Panc1 (cell line): ENCODE measurements at regions of chr5 and their contacts with region 1.

Region 1: GRCh38 chr5:150021491-150022162 is 21.1 kb downstream of the HMGXB3 start:
- DNase-seq: no peak
- ATAC-seq: peak; percentile 81
- H3K4me3 ChIP-seq: peak overlapping the region in 1 of 2 experiments; percentile 19; a peak in 1 of 4 replicates
- H3K27ac ChIP-seq: peak overlapping the region; percentile 25; the same call in 1 of the 2 replicates
- H3K4me1 ChIP-seq: peaks cover 17% of the 10 kb centered on the region
- H3K27me3 ChIP-seq: no peaks in the 10 kb centered on the region
- CTCF ChIP-seq: no peak

Region 2: GRCh38 chr5:150000256-150000989 is 21.2 kb before region 1 on chr5 and contains the starts of genes HMGXB3 and TIGD6:
- CTCF ChIA-PET with region 1: interaction called, 6 read pairs
- POLR2A ChIA-PET with region 1: interaction called, 12 read pairs
- in situ Hi-C with region 1: no loop called
- intact Hi-C with region 1: no loop called
- DNase-seq: peak; percentile 69
- ATAC-seq: peak; percentile 97
- H3K4me3 ChIP-seq: peak within 1 kb of the TSS; percentile 92 to 100
- H3K27ac ChIP-seq: peak within 1 kb of the TSS; percentile 97
- H3K4me1 ChIP-seq: peaks cover 17% of the 10 kb centered on the region
- H3K27me3 ChIP-seq: no peaks in the 10 kb centered on the region
- CTCF ChIP-seq: no peak
- total RNA-seq, gene HMGXB3: 56.2 TPM
- total RNA-seq, gene TIGD6: 7.1 TPM

Region 3: GRCh38 chr5:150006318-150006717 is 15.3 kb before region 1 on chr5:
- CTCF ChIA-PET with region 1: interaction called, 6 read pairs
- POLR2A ChIA-PET with region 1: interaction called, 12 read pairs
- in situ Hi-C with region 1: no loop called
- intact Hi-C with region 1: no loop called
- DNase-seq: no peak
- ATAC-seq: no peak
- H3K4me3 ChIP-seq: no peak overlapping the region
- H3K27ac ChIP-seq: no peak overlapping the region
- H3K4me1 ChIP-seq: peaks cover 11% of the 10 kb centered on the region
- H3K27me3 ChIP-seq: no peaks in the 10 kb centered on the region
- CTCF ChIP-seq: no peak

Region 4: DNA sequence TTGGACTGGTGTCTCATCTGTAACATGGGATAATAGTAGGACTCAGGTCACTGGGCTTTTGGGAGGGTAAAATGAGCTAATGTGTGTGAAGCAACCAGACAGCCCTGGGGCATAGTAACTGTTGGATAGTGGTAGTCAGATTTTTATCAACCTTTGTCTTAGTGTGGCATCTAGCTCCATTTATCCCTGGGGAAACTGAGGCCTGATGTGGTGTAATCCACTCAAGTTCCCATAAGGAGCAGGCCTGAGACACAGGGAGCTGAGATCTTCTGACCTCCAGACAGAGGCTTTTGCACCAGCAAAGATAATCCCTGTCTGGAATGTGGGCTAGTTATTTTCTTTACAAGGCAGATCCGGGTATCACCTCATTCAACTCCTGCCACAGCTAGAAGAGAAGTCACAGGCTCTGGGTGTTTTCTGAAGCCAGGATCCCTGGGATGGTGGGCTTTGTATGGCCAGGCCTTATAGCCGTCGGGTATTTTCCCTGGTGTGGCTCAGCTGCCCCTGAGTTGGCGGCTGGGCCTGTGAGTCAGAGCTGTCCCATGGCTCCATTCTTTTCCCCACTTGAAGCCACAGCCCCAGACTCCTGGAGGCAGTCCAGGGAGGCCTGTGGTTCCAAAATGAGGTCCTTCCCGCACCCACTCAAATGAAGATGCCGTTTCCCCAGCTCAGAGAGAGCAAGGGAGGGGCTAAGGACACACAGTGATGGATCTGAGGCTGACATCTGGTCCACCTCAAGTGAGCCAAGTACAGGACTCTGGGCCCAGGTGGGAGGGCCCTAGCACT is 90.8 kb after region 1 on chr5:
- CTCF ChIA-PET with region 1: no interaction called
- POLR2A ChIA-PET with region 1: interaction called, 12 read pairs
- in situ Hi-C with region 1: no loop called
- intact Hi-C with region 1: no loop called
- DNase-seq: no peak
- ATAC-seq: peak; percentile 28
- H3K4me3 ChIP-seq: no peak overlapping the region
- H3K27ac ChIP-seq: no peak overlapping the region
- H3K4me1 ChIP-seq: peaks cover 5% of the 10 kb centered on the region
- H3K27me3 ChIP-seq: no peaks in the 10 kb centered on the region
- CTCF ChIP-seq: no peak

Region 5: DNA sequence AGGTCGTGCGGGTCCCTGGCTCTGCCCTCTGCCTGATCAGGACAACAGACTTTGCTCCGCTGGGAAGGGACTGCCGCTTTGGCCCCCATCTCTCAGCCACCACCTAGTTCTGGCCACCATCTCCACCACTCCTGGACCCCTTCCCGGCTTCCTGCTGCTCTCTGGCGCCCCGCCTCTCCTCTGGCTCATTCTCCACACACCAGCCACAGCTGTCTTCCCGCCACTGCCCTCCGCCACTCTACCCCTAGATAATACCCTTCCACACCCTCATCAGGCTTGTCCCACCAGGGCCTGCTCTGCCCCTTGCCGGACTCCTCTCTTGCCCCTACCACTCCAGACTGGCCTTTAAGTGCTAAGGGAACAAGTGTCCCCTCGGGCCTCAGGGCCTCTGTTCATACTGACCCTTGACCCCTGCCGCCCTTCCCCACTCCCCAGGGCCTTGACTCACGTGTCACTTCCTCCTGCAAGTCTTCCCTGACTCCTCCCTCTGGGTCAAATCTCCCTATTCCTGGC is 142.0 kb after region 1 on chr5:
- CTCF ChIA-PET with region 1: no interaction called
- POLR2A ChIA-PET with region 1: no interaction called
- in situ Hi-C with region 1: no loop called
- intact Hi-C with region 1: no loop called
- DNase-seq: no peak
- ATAC-seq: no peak
- H3K4me3 ChIP-seq: no peak overlapping the region
- H3K27ac ChIP-seq: no peak overlapping the region
- H3K4me1 ChIP-seq: no peaks in the 10 kb centered on the region
- H3K27me3 ChIP-seq: no peaks in the 10 kb centered on the region
- CTCF ChIP-seq: no peak